ENCODE measurements at regions of chr18 and their contacts with region 1.

Region 1: DNA sequence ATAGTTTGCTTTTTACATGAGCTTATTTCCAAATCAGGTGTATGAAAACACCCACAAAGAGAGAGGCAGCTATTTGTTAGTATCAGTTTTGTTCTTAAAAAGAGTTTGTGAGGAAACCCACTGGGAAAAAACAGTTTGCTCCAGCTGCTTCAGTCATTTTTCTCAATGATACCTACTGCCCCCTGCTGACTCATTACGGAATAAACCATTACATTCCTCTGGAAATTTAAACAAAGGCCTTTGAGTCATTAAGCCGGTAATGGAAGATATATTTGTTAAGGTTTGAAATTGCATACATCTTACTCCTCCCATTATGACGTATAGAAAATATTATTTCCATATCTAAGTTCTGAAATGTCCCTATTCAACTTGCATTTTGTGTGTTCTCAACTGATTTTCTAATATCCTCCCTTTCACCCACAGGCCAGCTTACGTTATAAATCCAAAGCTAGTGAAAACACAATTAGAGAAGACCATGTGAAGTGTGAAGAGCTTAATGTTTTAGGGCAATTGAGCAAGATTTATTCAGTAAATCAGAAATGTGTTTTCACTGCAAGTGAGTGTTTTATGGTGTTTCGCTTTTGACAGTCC is 761.6 kb downstream of the DSC3 start:
- DNase-seq: peak; percentile 3
- H3K4me3 Mint-ChIP-seq: no peak overlapping the region
- H3K27ac Mint-ChIP-seq: no peak overlapping the region
- H3K4me1 Mint-ChIP-seq: no peaks in the 10 kb centered on the region
- H3K27me3 Mint-ChIP-seq: no peaks in the 10 kb centered on the region

Region 2: DNA sequence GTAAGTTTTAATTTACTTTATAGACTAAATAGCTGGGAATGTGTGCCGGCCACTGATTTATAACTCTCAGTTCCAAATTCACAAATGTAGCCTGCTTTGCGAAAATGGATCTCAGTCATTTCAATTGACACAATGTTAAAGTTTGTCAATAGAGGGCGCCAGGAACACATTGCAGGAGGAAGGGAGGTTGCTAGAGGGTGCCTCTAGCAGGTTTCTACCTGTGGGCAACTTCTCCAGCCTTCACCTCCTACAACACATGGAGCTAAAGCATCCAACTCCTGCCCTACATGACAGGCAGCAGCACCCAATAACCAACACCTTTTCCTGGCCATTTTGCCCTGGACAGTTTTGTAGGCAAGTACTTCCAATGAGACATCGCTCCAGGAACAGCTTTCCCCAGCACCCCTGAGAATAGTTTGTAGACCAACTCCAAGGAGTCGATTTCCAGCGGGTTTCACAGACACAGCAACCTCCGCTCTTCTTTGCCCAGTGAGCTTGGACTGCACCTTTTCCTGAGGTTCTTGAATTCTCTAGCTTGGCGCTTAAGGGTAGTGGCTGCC is 1319.2 kb before region 1 on chr18:
- CTCF ChIA-PET with region 1: no interaction called
- intact Hi-C with region 1: loop called (anchors 5 kb)
- DNase-seq: no peak
- H3K4me3 Mint-ChIP-seq: no peak overlapping the region
- H3K27ac Mint-ChIP-seq: no peak overlapping the region
- H3K4me1 Mint-ChIP-seq: no peaks in the 10 kb centered on the region
- H3K27me3 Mint-ChIP-seq: no peaks in the 10 kb centered on the region

Region 3: DNA sequence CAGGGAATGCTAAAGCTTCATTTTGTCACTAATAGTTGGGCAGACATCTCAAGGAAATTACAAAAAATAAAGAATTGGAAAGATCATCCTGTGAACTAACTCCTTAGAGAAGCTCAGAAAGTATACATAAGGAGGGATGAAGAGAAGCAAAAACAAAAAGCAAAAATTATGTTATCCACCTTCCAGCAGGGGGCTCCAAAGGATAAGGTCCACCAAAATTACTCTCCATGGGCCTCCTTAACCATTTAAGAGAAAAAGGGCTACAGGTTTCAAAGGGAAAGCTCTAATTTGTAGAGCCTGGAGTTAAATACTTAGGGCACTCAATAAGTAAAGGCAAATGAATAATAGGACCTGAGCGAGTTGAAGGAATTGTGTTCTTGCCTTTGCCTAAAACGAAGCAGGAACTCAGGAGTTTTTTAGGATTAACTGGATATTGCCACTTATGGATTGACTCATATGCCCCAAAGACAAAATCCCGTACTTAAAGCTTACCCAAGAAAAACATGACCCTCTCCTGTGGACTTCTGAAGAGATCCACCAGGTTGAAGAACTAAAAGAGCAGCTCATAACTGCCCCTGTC is 406.4 kb before region 1 on chr18:
- CTCF ChIA-PET with region 1: no interaction called
- intact Hi-C with region 1: loop called (anchors 2 kb)
- DNase-seq: peak; percentile 5
- H3K4me3 Mint-ChIP-seq: no peak overlapping the region
- H3K27ac Mint-ChIP-seq: no peak overlapping the region
- H3K4me1 Mint-ChIP-seq: no peaks in the 10 kb centered on the region
- H3K27me3 Mint-ChIP-seq: no peaks in the 10 kb centered on the region

Region 4: DNA sequence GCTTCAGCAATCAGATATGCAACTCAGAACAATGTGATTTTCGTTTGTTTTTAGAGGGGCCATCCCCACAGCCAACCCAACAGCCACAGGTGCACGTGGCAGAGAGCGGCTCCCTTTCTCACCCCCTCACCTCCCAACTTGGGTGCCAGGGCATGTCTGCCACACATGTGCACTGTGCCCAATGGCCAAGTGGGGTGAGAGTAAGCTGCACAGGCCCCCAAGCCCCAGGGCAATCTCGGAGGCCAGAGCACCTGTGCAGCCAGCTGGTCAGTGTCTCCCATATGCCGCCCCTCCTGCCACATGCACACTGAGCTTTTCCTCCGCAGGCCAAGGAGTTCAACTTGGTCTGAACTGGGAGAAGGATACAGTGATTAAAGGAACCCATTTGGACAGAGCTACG is 368.6 kb before region 1 on chr18:
- CTCF ChIA-PET with region 1: no interaction called
- intact Hi-C with region 1: no loop called
- DNase-seq: no peak
- H3K4me3 Mint-ChIP-seq: no peak overlapping the region
- H3K27ac Mint-ChIP-seq: no peak overlapping the region
- H3K4me1 Mint-ChIP-seq: no peaks in the 10 kb centered on the region
- H3K27me3 Mint-ChIP-seq: no peaks in the 10 kb centered on the region

Region 5: GRCh38 chr18:30004965-30005364 is 276.0 kb before region 1 on chr18:
- CTCF ChIA-PET with region 1: no interaction called
- intact Hi-C with region 1: no loop called
- DNase-seq: no peak
- H3K4me3 Mint-ChIP-seq: no peak overlapping the region
- H3K27ac Mint-ChIP-seq: no peak overlapping the region
- H3K4me1 Mint-ChIP-seq: no peaks in the 10 kb centered on the region
- H3K27me3 Mint-ChIP-seq: no peaks in the 10 kb centered on the region

Region 6: DNA sequence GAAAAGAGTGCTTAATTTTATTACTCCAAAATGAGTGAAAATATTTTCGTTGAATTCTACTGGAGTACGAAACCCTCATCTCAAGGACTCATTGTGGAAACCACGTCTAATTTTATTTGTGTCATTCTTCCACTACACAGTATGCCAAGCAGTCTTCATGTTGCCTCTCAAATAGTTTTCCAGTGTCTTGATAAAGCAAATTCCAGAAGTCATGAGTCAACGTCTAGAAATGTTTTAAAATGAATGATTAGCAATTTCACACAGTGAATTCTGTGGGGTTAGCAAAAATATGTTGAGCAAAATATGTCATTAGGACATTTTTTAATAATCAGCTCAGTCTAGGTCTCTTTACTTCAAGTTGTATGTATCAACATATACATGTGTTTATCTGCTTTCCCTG is 103.9 kb before region 1 on chr18:
- CTCF ChIA-PET with region 1: no interaction called
- intact Hi-C with region 1: no loop called
- DNase-seq: no peak
- H3K4me3 Mint-ChIP-seq: no peak overlapping the region
- H3K27ac Mint-ChIP-seq: no peak overlapping the region
- H3K4me1 Mint-ChIP-seq: no peaks in the 10 kb centered on the region
- H3K27me3 Mint-ChIP-seq: no peaks in the 10 kb centered on the region

Region 7: DNA sequence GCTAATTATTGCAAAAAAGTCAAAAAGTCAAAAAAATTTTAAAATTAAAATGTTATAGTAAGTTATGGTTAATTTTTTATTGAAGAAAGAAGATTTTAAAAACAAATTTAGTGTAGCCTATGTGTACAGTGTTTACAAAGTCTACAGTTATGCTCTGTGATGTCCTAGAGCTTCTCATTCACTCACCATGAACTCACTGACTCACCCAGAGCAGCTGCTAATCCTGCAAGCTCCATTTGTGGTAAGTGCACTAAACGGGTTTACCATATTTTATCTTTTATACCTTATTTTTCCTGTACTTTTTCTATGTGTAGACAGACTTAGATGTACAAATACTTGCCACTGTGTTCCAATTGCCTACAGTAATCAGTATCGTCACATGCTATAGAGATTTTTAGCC is 26.6 kb before region 1 on chr18:
- CTCF ChIA-PET with region 1: no interaction called
- intact Hi-C with region 1: no loop called
- DNase-seq: no peak
- H3K4me3 Mint-ChIP-seq: no peak overlapping the region
- H3K27ac Mint-ChIP-seq: no peak overlapping the region
- H3K4me1 Mint-ChIP-seq: no peaks in the 10 kb centered on the region
- H3K27me3 Mint-ChIP-seq: no peaks in the 10 kb centered on the region